Spleen (tissue), 13 donors: ENCODE measurements at regions of chr11 and their contacts with region 1.

Region 1: DNA sequence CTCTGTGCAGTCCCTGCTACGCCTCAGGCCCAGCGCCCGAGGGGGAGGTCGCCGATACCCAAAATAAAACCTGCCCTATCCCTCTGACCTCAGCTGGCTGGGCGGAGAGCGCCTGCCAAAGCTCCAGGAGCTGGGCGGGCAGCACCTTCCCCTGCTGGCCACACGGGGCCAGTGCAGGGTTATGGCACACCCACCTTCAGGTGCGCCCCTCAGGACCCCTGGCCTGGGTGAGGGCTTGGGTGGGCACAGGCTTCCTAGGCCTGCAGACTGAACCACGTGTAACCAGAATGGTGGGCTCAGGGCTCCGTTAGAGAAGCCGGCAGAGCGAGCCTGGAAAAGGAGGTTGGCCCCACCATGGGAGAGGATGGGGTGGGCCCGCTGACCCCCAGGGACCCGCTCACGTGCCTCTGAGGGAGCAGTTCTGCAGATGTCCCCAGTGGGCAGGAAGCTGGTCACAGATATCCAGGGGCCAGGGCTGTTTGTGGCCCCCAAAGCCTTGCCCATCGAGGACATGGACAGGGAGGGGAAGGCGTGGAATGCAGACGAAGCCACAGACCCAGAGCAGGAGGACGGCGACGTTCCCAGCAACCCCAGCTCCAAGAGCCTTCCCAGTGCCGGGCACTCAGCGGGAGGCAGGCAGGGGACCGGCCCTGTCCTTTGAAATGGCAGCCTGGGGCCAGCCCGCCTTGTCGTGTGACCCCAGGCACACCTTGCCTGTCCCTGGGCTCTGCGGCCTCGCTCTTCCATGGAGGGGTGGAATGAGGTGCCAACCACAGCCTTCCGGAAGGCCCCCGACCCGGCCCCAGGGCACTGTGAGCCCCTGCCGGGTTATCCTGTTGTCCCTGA is 1.6 kb upstream of the TNNT3 start:
- DNase-seq: peak; percentile 85
- H3K4me3 ChIP-seq: no peak overlapping the region
- H3K27ac ChIP-seq: peak overlapping the region in 2 of 8 donors; percentile 30 to 46
- H3K4me1 ChIP-seq: peaks cover 0 to 20% (median 2%) of the 10 kb centered on the region in 6 donors
- H3K27me3 ChIP-seq: peaks cover 0 to 20% (median 0%) of the 10 kb centered on the region in 7 donors
- CTCF ChIP-seq: peak; percentile 11 to 69 (median 45)
- POLR2A ChIP-seq: no peak

Region 2: GRCh38 chr11:1882519-1883238 is 35.2 kb before region 1 on chr11:
- intact Hi-C with region 1: loop called (anchors 5 kb)
- DNase-seq: peak; percentile 96
- H3K4me3 ChIP-seq: peak overlapping the region in 1 of 8 donors; percentile 34
- H3K27ac ChIP-seq: peak overlapping the region in 6 of 8 donors; percentile 60 to 86 (median 73)
- H3K4me1 ChIP-seq: peaks cover 26 to 65% (median 56%) of the 10 kb centered on the region in 6 donors
- H3K27me3 ChIP-seq: no peaks in the 10 kb centered on the region
- CTCF ChIP-seq: peak; percentile 80 to 97 (median 92)
- POLR2A ChIP-seq: no peak

Region 3: DNA sequence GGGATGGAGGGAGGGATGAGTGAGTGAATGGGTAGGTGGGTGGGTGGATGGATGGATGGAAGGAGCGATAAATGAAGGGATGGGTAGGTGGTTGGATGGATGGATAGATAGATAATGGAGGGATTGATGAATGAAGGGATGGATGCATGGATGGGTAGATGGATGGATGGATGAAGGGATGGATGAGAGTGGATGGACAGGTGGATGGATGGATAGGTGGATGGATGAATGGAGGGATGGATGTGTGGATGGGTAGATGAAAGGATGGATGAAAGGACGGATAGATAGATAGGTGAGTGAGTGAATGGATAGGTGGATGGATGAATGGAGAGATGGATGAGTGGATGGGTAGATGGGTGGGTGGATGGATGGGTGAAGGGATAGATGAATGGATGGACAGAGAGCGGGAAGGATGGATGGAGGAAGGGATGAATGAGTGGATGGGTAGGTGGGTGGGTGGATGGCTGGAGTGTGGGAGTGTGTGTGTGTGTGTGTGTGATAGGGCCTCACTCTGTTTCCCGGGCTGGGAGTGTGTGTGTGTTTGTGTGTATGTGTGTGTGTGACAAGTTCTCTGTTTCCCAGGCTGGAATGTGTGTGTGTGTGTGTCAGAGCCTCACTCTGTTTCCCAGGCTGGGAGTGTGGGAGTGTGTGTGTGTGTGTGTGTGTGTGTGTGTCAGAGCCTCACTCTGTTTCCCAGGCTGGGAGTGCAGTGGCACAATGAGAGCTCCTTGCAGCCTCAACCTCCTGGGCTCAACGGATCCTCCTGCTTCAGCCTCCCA is 24.1 kb before region 1 on chr11:
- intact Hi-C with region 1: loop called (anchors 1 kb)
- DNase-seq: no peak
- H3K4me3 ChIP-seq: no peak overlapping the region
- H3K27ac ChIP-seq: no peak overlapping the region
- H3K4me1 ChIP-seq: peaks cover 0 to 43% (median 32%) of the 10 kb centered on the region in 6 donors
- H3K27me3 ChIP-seq: peaks cover 0 to 14% (median 0%) of the 10 kb centered on the region in 7 donors
- CTCF ChIP-seq: no peak
- POLR2A ChIP-seq: no peak